Left lung (tissue), 14 donors: ENCODE measurements at regions of chr12 and their contacts with region 1.

Region 1: GRCh38 chr12:63843721-63844390 is 644 bp upstream of the SRGAP1 start:
- DNase-seq: peak; percentile 89 to 96 (median 94)
- ATAC-seq: peak; percentile 95
- H3K4me3 ChIP-seq: peak overlapping the region; percentile 67 to 75
- H3K27ac ChIP-seq: peak overlapping the region; percentile 87 to 88
- H3K4me1 ChIP-seq: peaks cover 9 to 20% of the 10 kb centered on the region in 2 donors
- H3K27me3 ChIP-seq: peaks cover 0 to 26% of the 10 kb centered on the region in 2 donors
- CTCF ChIP-seq: peak; percentile 88 to 94

Region 2: GRCh38 chr12:64181504-64182291 is 337.8 kb after region 1 on chr12:
- intact Hi-C with region 1: loop called in 1 of 2 experiments (anchors 2 kb)
- DNase-seq: peak in 2 of 4 donors; percentile 55 to 83
- ATAC-seq: peak; percentile 86
- H3K4me3 ChIP-seq: no peak overlapping the region
- H3K27ac ChIP-seq: peak overlapping the region; percentile 67 to 72
- H3K4me1 ChIP-seq: no peaks in the 10 kb centered on the region
- H3K27me3 ChIP-seq: no peaks in the 10 kb centered on the region
- CTCF ChIP-seq: peak; percentile 30 to 57

Region 3: GRCh38 chr12:64256166-64256800 is 412.4 kb after region 1 on chr12:
- intact Hi-C with region 1: loop called in 1 of 2 experiments (anchors 5 kb)
- DNase-seq: peak in 2 of 4 donors; percentile 67 to 79
- ATAC-seq: peak; percentile 82
- H3K4me3 ChIP-seq: no peak overlapping the region
- H3K27ac ChIP-seq: no peak overlapping the region
- H3K4me1 ChIP-seq: peaks cover 0 to 5% of the 10 kb centered on the region in 2 donors
- H3K27me3 ChIP-seq: no peaks in the 10 kb centered on the region
- CTCF ChIP-seq: peak; percentile 54 to 58